ENCODE measurements at regions of chr21 and their contacts with region 1.

Region 1: GRCh38 chr21:35342440-35342839 is 293.3 kb upstream of the RUNX1 start:
- DNase-seq: no peak
- ATAC-seq: no peak

Region 2: GRCh38 chr21:33915368-33916199 is 1426.9 kb before region 1 on chr21 and contains the start of gene ATP5PO:
- intact Hi-C with region 1: loop called (anchors 10 kb)
- DNase-seq: peak; percentile 98
- ATAC-seq: peak; percentile 100
- total RNA-seq, gene ATP5PO: 112 TPM

Region 3: GRCh38 chr21:35400233-35400957 is 58.0 kb after region 1 on chr21:
- intact Hi-C with region 1: no loop called
- DNase-seq: no peak
- ATAC-seq: peak; percentile 81

Region 4: DNA sequence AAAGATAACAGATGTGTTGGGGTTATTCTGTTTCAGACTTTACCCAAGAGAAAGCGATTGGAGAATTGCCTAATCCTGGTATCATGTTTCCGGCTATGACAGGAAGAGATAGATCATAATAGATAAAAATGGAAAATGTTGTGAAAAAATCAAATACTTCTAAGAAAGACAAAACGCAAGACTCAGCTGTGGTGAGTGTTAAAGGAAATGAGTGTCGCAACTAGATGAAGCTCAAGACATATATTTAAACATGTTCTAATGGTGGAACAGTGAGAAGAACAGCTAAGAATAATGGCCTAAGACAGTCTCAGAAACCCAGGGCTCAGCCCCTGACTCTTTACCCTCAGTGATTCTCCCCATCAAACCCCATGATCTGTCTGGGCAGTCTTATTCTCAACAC is 133.3 kb after region 1 on chr21:
- intact Hi-C with region 1: no loop called
- DNase-seq: no peak
- ATAC-seq: peak; percentile 78

Region 5: DNA sequence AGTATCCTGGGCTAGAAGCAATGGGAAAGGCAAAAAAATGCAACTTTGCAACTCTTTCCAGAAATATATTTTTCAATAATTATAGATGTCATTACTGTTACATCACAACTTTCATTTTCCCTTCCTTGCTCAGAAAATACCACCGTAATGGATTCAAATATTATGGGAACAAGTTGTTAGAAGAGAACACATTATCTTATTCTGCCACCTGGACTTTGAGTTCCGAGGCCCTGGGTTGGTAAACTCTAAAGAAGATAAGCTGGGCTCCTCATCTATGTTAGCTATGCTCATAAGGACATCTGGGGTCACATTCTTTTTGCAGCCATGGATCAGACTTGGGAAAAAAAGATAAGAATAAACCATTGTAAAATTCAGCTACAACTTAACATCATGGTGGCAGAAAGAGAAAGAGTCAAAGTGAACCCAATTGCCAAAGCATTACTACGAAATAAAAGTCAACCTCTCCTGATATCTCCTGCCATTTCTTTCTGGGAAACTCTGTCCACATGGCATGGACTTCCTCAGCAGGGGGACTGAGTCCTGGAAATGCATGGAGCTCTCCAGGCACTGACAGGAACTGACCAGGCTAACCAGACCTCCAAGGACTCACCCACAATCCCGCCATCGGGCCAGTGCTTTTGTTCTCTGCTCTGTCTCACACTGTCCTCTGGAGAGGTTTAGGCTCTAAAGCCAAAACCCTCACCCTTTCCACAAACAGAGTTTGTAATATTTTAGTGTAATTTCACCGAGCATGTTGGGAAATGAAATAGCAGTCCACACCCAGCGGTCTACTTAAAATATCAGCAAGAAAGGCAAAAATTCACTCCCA is 205.7 kb after region 1 on chr21:
- intact Hi-C with region 1: no loop called
- DNase-seq: no peak
- ATAC-seq: no peak

Region 6: GRCh38 chr21:35861661-35862060 is 519.2 kb after region 1 on chr21:
- intact Hi-C with region 1: no loop called
- DNase-seq: no peak
- ATAC-seq: no peak